A549 (cell line): ENCODE measurements at regions of chr6 and their contacts with region 1.

Region 1: DNA sequence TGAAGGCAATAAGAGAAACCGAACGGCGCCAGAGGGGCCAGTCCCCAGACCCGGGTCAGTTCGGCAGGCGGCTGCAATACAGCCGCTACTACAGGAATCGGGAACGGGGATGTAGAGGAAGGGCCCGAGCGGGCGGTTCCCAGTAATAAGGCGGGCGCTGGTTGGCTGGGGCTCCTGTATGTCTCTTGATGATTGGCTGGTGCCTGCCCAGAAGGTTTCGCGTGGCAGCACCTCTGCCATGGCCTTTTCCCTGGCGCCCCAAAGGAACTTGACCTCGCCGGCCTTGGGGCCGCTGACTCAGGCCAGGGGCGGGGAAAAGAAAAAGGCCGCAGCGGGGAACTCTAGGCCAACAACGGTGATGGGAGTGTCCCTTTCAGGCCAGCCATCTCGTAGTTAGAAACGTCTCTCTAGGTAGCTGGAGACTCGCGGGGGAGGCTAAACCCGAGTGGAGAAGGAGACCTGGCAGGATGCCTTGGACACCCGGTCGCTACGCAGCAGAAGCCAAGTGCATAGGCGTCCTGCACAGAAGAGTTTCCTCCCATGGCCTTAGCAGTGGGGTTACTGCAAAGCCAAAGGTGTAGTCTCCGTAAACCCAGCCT is at the start of gene IBTK:
- DNase-seq: peak; percentile 85 to 96
- ATAC-seq: peak; percentile 90 to 92
- H3K4me3 ChIP-seq: peak within 1 kb of the TSS; percentile 93
- H3K27ac ChIP-seq: peak within 1 kb of the TSS; percentile 94 to 99
- H3K4me1 ChIP-seq: peaks cover 40% of the 10 kb centered on the region
- CTCF ChIP-seq: no peak
- EP300 ChIP-seq: no peak
- POLR2A ChIP-seq: peak; percentile 25; the same call in 1 of the 2 replicates
- RAD21 ChIP-seq: no peak
- polyA plus RNA-seq, gene IBTK: 64.0 and 87.3 TPM in 2 replicates

Region 2: DNA sequence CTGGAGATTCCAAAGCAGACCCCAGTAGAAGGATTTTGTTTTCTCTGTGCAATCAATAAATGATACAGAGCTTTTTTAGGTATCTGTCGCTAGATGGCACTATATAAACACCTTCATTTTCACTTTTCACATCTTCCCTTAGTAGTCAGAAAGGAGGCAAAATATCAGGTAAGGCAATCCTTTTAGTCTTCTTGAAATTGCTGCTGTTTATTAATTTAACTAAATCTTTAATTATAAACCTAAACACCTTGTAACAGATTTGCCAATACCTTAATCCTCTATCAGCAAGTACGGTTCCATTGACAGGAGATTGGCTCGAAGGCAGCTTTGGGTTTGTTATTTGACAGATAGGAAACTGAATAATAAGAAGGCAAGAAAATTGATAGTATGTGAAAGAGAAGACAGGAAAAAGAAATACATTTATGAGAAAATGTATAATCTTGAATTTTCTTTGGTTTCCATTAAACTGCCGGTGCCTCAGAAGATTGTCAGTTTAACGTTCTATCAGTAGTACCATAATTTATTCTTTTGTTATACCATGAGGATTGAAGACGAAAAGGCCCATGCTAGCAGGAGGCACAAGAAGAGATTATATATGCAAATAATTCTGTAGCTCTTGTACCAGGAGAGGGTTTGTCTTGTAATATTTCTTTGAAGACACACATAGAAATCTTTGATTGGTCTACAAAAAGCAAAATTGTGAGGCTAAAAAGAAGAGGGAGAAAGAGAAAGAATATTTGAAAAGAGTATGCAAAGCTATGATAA is 23.3 kb after region 1 on chr6:
- CTCF ChIA-PET with region 1: interaction called, 19 read pairs
- POLR2A ChIA-PET with region 1: interaction called, 5 read pairs
- DNase-seq: peak; percentile 36 to 49
- ATAC-seq: peak in 1 of 2 experiments; percentile 58; a peak in 3 of 6 replicates
- H3K4me3 ChIP-seq: no peak overlapping the region
- H3K27ac ChIP-seq: peak overlapping the region in 1 of 2 experiments; percentile 61; a peak in 1 of 6 replicates
- H3K4me1 ChIP-seq: peaks cover 8% of the 10 kb centered on the region; the same call in 1 of the 3 replicates
- CTCF ChIP-seq: peak; percentile 65
- EP300 ChIP-seq: no peak
- POLR2A ChIP-seq: no peak
- RAD21 ChIP-seq: peak; percentile 74 to 83

Region 3: GRCh38 chr6:83057705-83058321 is 810.1 kb after region 1 on chr6:
- CTCF ChIA-PET with region 1: interaction called, 46 read pairs
- POLR2A ChIA-PET with region 1: no interaction called
- DNase-seq: peak; percentile 25 to 45
- ATAC-seq: peak; percentile 83 to 86; a peak in 5 of 6 replicates
- H3K4me3 ChIP-seq: no peak overlapping the region
- H3K27ac ChIP-seq: no peak overlapping the region
- H3K4me1 ChIP-seq: no peaks in the 10 kb centered on the region
- CTCF ChIP-seq: peak; percentile 69
- EP300 ChIP-seq: no peak
- POLR2A ChIP-seq: no peak
- RAD21 ChIP-seq: peak; percentile 68 to 69